GM13976 (cell line): ENCODE measurements at regions of chr10 and their contacts with region 1.

Region 1: GRCh38 chr10:110137142-110137545 is 70.3 kb upstream of the MXI1 start:
- DNase-seq: peak; percentile 60
- CTCF ChIP-seq: peak; percentile 60

Region 2: DNA sequence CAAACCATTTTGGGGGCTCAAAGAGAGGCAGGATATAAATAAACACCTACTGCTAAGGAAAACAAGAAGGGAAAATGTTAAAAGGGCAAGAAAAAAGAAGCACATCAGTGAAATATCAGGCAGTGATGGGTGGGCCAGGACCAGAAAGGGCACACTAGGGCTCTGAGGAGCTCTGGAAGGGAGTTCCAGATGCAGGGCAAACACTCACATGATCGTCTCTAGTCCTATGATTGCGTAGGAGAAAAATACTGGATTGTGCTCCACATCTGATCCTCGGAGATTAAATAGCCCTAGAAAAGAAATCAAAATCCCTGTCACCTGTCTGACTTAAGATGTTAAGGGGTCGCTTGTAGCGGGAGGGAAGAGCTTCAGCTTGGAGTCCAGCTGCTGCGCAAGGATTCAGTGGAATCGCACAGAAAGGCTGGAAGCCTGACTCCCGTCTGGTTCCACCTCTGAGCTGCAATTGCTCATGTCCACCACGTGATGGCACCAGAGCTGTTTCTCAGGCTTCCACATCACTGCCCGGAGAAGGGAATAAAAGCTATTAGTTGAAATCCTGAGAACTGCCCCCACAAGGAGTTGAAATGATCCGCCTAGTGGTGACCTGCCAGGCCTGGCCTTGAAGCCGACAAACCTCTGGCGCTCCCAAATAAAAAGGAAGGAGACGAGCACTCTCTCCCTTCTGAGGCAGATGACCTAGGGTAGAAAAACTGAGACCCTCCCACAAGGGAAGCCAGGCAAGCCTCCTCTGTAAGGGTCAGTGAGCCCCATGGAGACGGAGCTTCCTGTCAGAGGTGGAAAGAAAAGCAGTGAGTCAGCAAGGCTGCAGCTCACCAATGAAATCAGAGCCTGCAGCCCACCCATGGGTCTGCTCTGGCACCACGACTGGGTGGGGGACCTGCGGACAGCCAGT is 253.0 kb before region 1 on chr10:
- in situ Hi-C with region 1: loop called (anchors 10 kb)
- DNase-seq: peak; percentile 79
- CTCF ChIP-seq: peak; percentile 89

Region 3: GRCh38 chr10:109978481-109978880 is 158.7 kb before region 1 on chr10:
- in situ Hi-C with region 1: loop called (anchors 10 kb)
- DNase-seq: peak; percentile 46
- CTCF ChIP-seq: peak; percentile 76

Region 4: DNA sequence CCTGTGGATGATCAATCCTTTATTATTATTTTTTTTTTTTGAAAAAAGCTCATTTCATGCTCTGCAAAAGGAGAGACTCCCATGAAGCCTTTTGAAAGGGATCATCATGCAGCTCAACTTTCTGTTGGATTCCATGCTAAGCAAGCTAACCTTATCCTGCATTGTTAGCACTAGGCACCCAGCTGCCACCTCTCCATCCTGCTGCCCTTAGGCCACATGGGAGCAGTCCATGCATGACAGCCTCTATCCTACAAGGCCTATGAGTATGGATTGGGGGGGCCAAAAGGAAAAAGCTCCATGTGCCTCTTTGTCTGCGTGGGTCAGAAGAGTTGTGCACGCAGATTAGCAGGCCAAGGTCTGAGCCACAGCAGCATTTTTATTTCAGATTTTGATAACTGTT is 148.4 kb after region 1 on chr10:
- in situ Hi-C with region 1: loop called (anchors 5 kb)
- DNase-seq: no peak
- CTCF ChIP-seq: no peak

Region 5: GRCh38 chr10:110414563-110415309 is 277.6 kb after region 1 on chr10:
- in situ Hi-C with region 1: no loop called
- DNase-seq: peak; percentile 78
- CTCF ChIP-seq: no peak

Region 6: DNA sequence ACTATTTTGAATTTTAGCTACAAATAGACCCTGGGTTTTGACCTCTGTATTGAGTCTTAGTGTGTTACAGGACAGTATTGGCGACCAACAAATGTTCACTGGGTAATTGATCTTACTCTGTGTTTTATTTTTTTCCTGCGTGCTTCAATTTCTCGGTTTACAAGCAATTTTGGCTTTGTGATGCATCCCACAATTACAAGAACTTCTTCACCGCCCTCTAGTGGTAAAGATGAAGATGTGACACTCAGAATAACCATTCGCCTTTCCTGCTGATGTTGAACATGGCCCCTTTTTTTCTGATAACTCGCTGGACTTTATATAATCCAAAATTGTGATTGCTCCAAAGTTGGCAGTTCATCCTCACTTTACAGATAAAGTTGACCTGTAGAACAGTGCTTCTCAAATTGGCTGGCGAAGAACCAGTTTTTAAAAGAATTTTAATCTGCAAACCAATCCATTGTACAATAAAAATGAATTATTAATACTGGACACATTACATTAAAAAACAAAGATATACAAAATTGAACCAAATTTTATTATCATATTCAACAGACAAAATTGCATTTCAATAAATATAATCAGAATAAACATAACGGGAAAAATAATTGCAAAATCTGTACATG is 410.1 kb after region 1 on chr10:
- in situ Hi-C with region 1: loop called (anchors 10 kb)
- DNase-seq: peak; percentile 72
- CTCF ChIP-seq: peak; percentile 70